ENCODE measurements at regions of chr19 and their contacts with region 1.

Region 1: DNA sequence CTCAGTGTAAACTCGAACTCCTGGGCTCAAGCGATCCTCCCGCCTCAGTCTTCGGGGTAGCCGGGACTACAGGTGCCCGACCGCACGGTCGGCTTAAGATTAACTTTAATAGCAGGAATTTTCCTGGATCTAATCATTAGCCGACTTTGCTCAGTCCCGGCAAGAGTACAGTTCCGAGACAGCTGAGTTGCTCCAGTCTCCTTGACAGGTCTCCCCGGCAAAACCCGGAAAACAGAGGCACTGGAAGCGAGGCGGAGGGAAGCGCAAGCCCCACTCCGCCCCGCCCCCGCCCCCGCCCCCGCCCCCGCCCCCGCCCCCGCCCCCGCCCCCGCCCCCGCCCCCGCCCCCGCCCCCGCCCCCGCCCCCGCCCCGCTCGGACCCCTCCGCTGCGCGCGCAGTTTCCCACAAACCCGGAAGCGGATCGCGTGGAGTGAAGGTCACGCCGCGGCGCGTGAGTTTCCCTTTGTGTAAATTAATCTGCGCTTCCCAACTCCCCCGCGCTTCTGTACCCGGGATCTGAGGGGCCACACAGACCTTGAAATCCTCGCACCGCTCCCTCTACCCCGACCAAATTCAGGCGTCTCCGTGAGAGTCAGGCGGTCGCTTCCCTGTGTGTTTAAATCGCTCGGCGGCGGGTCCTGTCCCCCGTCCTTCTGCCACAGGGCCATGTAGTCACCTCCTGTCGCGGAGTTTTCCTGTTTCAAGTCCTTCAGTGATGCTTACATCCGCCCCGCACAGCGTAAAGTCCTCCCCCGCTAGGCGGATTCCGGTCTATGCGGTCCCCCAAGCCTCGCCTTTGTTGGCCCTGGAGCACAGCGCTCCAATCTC is at the start of gene ZNF480:
- DNase-seq: peak; percentile 77
- H3K4me3 Mint-ChIP-seq: peak within 1 kb of the TSS; percentile 91
- H3K27ac Mint-ChIP-seq: peak within 1 kb of the TSS; percentile 95
- H3K4me1 Mint-ChIP-seq: peaks cover 12% of the 10 kb centered on the region
- H3K27me3 Mint-ChIP-seq: peaks cover 5% of the 10 kb centered on the region
- total RNA-seq, gene ZNF480: 3.4 to 4.1 TPM

Region 2: DNA sequence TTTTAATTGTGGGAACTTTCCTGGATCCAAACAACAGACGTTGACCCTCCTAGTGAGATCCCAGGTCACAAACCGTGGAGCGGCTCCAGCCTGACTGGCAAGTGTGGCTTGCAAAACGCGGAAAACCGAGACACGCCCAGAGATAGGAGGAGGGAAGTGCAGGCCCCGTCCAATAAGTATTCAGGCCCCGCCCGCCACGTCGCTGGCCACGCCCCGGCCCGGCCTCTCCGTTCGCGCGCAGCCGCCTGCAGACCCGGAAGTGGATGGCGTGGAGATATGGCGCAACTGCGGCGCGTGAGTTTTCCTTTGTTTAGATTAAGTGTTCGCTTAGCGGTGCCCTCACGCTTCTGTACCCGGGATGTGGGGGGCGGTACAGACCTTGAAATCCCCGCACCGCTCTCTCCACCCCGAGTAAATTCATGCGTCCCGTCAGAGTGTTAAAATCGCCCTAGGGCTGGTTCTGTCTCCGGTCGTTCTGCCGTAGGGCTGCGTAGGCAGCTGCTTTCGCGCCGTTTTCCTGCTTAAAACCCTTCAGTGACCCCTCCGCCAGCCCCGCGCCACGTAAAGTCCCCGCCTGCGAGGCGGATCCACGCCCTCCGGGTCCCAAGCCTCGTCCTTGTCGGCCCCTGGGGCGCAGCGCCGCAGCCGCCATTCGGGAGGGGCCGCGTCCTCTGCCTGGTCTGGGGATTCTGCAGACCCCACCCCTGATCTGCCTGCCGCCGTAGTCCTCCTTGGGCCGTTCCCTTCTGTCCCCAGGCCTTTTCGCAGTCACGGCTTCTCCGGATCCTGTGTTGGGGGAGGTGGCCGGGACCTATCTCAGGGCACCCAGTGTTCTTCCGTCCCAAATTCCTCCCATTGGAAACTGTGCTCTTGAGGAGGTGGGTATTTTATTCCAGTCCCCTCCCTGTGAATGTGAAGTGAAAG is 27.4 kb before region 1 on chr19 and contains the start of gene ZNF766:
- CTCF ChIA-PET with region 1: no interaction called
- POLR2A ChIA-PET with region 1: no interaction called
- intact Hi-C with region 1: loop called (anchors 1 kb)
- DNase-seq: peak; percentile 98
- H3K4me3 Mint-ChIP-seq: peak within 1 kb of the TSS; percentile 96
- H3K27ac Mint-ChIP-seq: peak within 1 kb of the TSS; percentile 95
- H3K4me1 Mint-ChIP-seq: peaks cover 37% of the 10 kb centered on the region
- H3K27me3 Mint-ChIP-seq: no peaks in the 10 kb centered on the region
- total RNA-seq, gene ZNF766: 21.6 to 23.2 TPM

Region 3: GRCh38 chr19:52336117-52336790 is 39.3 kb after region 1 on chr19 and contains the start of gene ZNF610:
- CTCF ChIA-PET with region 1: no interaction called
- POLR2A ChIA-PET with region 1: no interaction called
- intact Hi-C with region 1: loop called (anchors 1 kb)
- DNase-seq: peak; percentile 94
- H3K4me3 Mint-ChIP-seq: peak within 1 kb of the TSS; percentile 93
- H3K27ac Mint-ChIP-seq: peak within 1 kb of the TSS; percentile 91
- H3K4me1 Mint-ChIP-seq: peaks cover 13% of the 10 kb centered on the region
- H3K27me3 Mint-ChIP-seq: no peaks in the 10 kb centered on the region
- total RNA-seq, gene ZNF610: 1.7 to 2.1 TPM

Measured in activated CD4-positive, alpha-beta memory T cell treated with anti-CD3 and anti-CD28 coated beads for 36 hours (primary cell).